ENCODE measurements at regions of chr11 and their contacts with region 1.

Region 1: DNA sequence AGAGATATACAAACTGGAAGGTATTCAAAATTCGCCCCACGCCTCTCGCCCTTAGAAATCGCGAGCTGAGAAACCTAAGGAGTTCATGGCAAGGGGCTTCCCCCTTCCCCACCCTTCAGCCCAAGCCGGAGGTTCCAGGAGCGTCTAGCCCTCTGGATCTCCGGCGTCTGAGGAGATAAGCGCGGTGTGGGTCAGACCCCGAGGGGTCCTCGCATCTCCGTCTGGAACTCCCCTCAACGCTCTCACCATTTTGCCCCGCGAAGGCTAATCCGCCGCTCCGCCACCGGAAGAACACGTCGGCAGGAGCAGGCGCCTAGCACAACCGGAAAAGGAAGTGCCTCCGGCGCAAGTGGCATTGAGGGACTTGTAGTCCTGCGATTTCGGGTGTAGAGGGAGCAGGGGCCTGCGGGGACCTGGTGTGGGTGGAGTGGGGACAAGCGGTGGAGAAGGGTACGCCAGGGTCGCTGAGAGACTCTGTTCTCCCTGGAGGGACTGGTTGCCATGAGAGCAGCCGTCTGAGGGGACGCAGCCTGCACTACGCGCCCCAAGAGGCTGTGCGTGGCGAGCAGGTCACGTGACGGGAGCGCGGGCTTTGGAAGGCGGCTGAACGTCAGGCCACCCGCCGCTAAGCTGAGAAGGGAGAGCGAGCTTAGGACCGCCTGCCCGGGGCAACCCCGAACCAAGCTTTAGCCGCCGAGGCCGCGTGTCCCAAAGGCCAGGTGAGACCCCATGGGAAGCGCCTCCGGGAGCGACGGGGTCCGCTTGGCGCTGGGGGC is at the starts of genes FEN1 and TMEM258:
- DNase-seq: peak; percentile 75
- H3K4me3 ChIP-seq: peak within 1 kb of the TSS; percentile 98
- CTCF ChIP-seq: no peak

Region 2: GRCh38 chr11:61581030-61581928 is 211.2 kb before region 1 on chr11 and contains the start of gene SYT7:
- CTCF ChIA-PET with region 1: no interaction called
- POLR2A ChIA-PET with region 1: no interaction called
- DNase-seq: peak; percentile 82
- H3K4me3 ChIP-seq: peak within 1 kb of the TSS; percentile 47
- CTCF ChIP-seq: peak; percentile 24

Region 3: GRCh38 chr11:61803889-61804647 is 11.6 kb after region 1 on chr11:
- CTCF ChIA-PET with region 1: interaction called, 44 read pairs
- POLR2A ChIA-PET with region 1: no interaction called
- DNase-seq: no peak
- H3K4me3 ChIP-seq: no peak overlapping the region
- CTCF ChIP-seq: no peak

Region 4: GRCh38 chr11:61834278-61835048 is 42.0 kb after region 1 on chr11:
- CTCF ChIA-PET with region 1: interaction called, 53 read pairs
- POLR2A ChIA-PET with region 1: interaction called, 4 read pairs
- DNase-seq: no peak
- H3K4me3 ChIP-seq: no peak overlapping the region
- CTCF ChIP-seq: no peak

Region 5: GRCh38 chr11:61891331-61892084 is 99.0 kb after region 1 on chr11 and contains the start of gene FADS3:
- CTCF ChIA-PET with region 1: interaction called, 98 read pairs
- POLR2A ChIA-PET with region 1: no interaction called
- DNase-seq: no peak
- H3K4me3 ChIP-seq: peak within 1 kb of the TSS; percentile 90
- CTCF ChIP-seq: no peak

Region 6: GRCh38 chr11:61967116-61967923 is 174.8 kb after region 1 on chr11 and contains the start of gene FTH1:
- CTCF ChIA-PET with region 1: interaction called, 12 read pairs
- POLR2A ChIA-PET with region 1: interaction called, 6 read pairs
- DNase-seq: no peak
- H3K4me3 ChIP-seq: peak within 1 kb of the TSS; percentile 98
- CTCF ChIP-seq: no peak

Region 7: DNA sequence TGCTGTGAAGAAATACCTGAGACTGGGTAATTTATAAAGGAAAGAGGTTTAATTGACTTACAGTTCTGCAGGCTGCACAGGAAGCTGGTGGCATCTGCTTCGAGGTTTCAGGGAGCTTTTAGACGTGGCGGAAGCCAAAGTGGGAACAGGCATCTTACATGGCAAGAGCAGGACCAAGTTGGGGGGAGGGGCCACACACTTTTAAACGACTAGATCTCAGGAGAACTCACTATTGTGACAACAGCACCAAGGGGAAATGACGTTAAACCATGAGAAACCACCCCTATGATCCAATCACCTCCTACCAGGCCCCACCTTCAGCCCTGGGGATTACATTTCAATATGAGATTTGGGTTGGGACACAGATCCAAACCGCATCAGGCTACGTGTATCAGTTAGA is 517.5 kb after region 1 on chr11:
- CTCF ChIA-PET with region 1: interaction called, 43 read pairs
- POLR2A ChIA-PET with region 1: no interaction called
- DNase-seq: no peak
- H3K4me3 ChIP-seq: no peak overlapping the region
- CTCF ChIP-seq: no peak